Right lobe of liver (tissue), 6 donors: ENCODE measurements at regions of chr2 and their contacts with region 1.

Region 1: GRCh38 chr2:74876081-74876886 is 42.4 kb downstream of the HK2 start:
- DNase-seq: peak in 1 of 3 donors; percentile 44
- ATAC-seq: peak; percentile 68 to 83 (median 80)
- H3K4me3 ChIP-seq: no peak overlapping the region
- H3K27ac ChIP-seq: no peak overlapping the region
- H3K4me1 ChIP-seq: peaks cover 0 to 6% (median 0%) of the 10 kb centered on the region in 4 donors
- H3K27me3 ChIP-seq: no peaks in the 10 kb centered on the region
- CTCF ChIP-seq: peak; percentile 61 to 78 (median 72)
- POLR2A ChIP-seq: no peak

Region 2: GRCh38 chr2:74682501-74682900 is 193.8 kb before region 1 on chr2:
- intact Hi-C with region 1: loop called in 1 of 2 experiments (anchors 5 kb)
- DNase-seq: no peak
- ATAC-seq: no peak
- H3K4me3 ChIP-seq: no peak overlapping the region
- H3K27ac ChIP-seq: no peak overlapping the region
- H3K4me1 ChIP-seq: no peaks in the 10 kb centered on the region
- H3K27me3 ChIP-seq: no peaks in the 10 kb centered on the region
- CTCF ChIP-seq: no peak
- POLR2A ChIP-seq: no peak

Region 3: DNA sequence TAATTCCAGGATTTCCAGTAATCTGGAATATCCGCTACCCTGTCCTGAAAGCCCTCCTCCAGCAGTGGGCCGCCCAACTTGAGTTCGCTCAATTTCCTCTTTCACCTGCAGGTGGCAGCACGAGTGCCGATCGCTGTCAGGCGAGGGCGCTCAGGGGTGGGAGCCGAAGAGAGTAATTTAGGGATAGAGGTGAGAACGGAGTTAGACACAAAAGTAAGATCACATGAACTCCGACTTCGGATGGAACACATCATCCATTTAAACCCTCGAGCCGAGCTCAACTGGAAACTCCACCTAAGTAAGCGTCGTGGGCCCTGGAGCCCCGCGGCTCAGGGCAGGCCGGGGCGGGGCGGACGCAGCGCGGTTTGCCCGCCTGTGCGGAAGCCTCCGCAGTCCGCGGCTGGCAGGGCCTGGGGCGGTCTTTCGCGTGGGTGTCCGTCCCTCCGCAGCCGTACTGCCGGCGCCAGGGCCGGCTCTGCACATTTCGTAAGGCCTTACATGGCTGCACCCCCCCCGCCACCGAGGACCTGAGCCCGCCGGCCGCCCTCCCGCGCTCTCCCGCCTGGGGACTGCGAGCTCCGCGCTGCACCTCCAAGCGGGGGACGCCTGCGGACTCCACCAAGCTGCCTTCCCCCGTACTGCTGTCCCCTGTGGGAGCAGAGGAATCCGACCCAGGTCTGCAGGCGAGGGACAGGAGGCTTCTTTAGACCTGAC is 161.0 kb before region 1 on chr2:
- intact Hi-C with region 1: loop called (anchors 5 to 10 kb)
- DNase-seq: peak; percentile 82 to 85 (median 83)
- ATAC-seq: peak; percentile 95 to 98 (median 98)
- H3K4me3 ChIP-seq: peak overlapping the region; percentile 34 to 61 (median 50)
- H3K27ac ChIP-seq: no peak overlapping the region
- H3K4me1 ChIP-seq: peaks cover 0 to 6% (median 0%) of the 10 kb centered on the region in 4 donors
- H3K27me3 ChIP-seq: no peaks in the 10 kb centered on the region
- CTCF ChIP-seq: peak; percentile 74 to 90 (median 86)
- POLR2A ChIP-seq: no peak

Region 4: GRCh38 chr2:74982577-74982976 is 106.3 kb after region 1 on chr2:
- intact Hi-C with region 1: no loop called
- DNase-seq: no peak
- ATAC-seq: no peak
- H3K4me3 ChIP-seq: no peak overlapping the region
- H3K27ac ChIP-seq: no peak overlapping the region
- H3K4me1 ChIP-seq: no peaks in the 10 kb centered on the region
- H3K27me3 ChIP-seq: no peaks in the 10 kb centered on the region
- CTCF ChIP-seq: no peak
- POLR2A ChIP-seq: no peak